ENCODE measurements at regions of chr7 and their contacts with region 1.

Region 1: DNA sequence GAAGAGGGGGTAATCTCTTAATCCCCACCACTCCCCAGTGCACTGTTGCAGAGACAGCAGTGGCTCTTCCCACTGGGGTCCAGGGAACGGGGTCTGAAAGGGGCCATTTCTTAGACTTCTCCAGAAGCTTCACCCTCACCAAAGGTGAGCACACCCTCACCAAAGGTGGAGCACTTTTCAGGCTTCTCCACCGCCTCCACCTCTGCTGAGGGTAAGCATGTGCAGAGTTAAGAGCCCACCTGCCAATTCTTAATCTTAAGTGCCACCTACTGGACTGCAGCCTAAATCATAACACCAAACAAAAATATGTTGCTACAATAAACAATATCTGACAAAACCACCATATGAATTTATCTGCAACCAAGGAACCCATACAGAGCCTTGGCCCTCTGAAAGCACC is 27.0 kb downstream of the SNX13 start:
- DNase-seq: no peak
- H3K4me3 Mint-ChIP-seq: no peak overlapping the region
- H3K27ac Mint-ChIP-seq: no peak overlapping the region
- H3K4me1 Mint-ChIP-seq: peaks cover 35% of the 10 kb centered on the region
- H3K27me3 Mint-ChIP-seq: no peaks in the 10 kb centered on the region

Region 2: GRCh38 chr7:17706734-17707133 is 206.5 kb before region 1 on chr7:
- CTCF ChIA-PET with region 1: no interaction called
- intact Hi-C with region 1: loop called (anchors 10 kb)
- DNase-seq: peak; percentile 61
- H3K4me3 Mint-ChIP-seq: no peak overlapping the region
- H3K27ac Mint-ChIP-seq: no peak overlapping the region
- H3K4me1 Mint-ChIP-seq: no peaks in the 10 kb centered on the region
- H3K27me3 Mint-ChIP-seq: no peaks in the 10 kb centered on the region

Region 3: GRCh38 chr7:17929647-17930395 is 16.6 kb after region 1 on chr7:
- CTCF ChIA-PET with region 1: no interaction called
- intact Hi-C with region 1: loop called (anchors 2 kb)
- DNase-seq: no peak
- H3K4me3 Mint-ChIP-seq: no peak overlapping the region
- H3K27ac Mint-ChIP-seq: no peak overlapping the region
- H3K4me1 Mint-ChIP-seq: peaks cover 66% of the 10 kb centered on the region
- H3K27me3 Mint-ChIP-seq: no peaks in the 10 kb centered on the region

Region 4: GRCh38 chr7:17965603-17966002 is 52.4 kb after region 1 on chr7:
- CTCF ChIA-PET with region 1: no interaction called
- intact Hi-C with region 1: no loop called
- DNase-seq: no peak
- H3K4me3 Mint-ChIP-seq: no peak overlapping the region
- H3K27ac Mint-ChIP-seq: no peak overlapping the region
- H3K4me1 Mint-ChIP-seq: no peaks in the 10 kb centered on the region
- H3K27me3 Mint-ChIP-seq: no peaks in the 10 kb centered on the region

Region 5: GRCh38 chr7:17976952-17977351 is 63.7 kb after region 1 on chr7:
- CTCF ChIA-PET with region 1: no interaction called
- intact Hi-C with region 1: no loop called
- DNase-seq: no peak
- H3K4me3 Mint-ChIP-seq: no peak overlapping the region
- H3K27ac Mint-ChIP-seq: no peak overlapping the region
- H3K4me1 Mint-ChIP-seq: no peaks in the 10 kb centered on the region
- H3K27me3 Mint-ChIP-seq: no peaks in the 10 kb centered on the region

Measured in activated naive CD4-positive, alpha-beta T cell treated with anti-CD3 and anti-CD28 coated beads for 36 hours (primary cell).